ENCODE measurements at regions of chr15 and their contacts with region 1.

Region 1: DNA sequence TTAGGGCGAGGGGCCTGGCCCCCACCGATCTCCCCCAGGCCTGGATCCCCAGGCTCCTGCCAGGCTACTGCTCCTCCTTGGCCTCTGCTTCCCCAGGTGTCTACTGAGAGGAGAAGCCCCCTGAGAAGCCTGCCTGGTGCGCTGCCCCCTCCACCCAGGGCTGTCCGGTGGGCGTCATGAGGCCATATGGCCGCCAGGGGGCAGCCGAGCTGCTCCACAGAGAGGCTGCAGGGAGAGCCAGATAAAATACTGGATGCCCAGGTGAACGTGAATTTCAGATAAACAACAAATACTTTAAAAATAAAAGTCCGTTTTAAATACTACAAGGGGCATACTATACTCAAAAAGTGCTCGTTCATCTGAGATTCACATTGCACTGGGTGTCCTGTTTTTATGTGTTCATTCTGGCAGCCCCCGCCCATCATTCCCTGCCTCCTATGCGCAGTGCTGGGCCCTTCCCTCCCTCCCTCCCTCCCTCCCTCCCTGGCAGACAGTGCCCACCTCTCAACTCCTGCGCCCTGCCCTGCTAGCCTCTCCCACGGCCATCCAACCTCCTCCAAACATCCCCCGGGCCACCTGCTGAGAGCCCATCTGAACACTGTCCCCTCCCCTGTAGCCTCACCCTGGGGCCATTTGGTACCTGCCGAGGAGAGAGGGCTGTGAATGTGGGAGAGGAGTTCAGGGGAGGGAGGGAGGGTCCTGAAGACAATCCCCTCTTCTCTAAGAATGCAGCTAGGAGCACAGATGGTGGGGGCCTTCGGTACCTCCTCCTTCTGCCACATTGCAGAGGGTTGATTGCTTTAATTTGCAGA is 29.6 kb downstream of the PSTPIP1 start:
- DNase-seq: no peak
- H3K4me3 ChIP-seq: no peak overlapping the region
- CTCF ChIP-seq: peak; percentile 91

Region 2: GRCh38 chr15:77002954-77003912 is 21.2 kb before region 1 on chr15:
- CTCF ChIA-PET with region 1: interaction called, 13 read pairs
- POLR2A ChIA-PET with region 1: no interaction called
- DNase-seq: no peak
- H3K4me3 ChIP-seq: no peak overlapping the region
- CTCF ChIP-seq: no peak

Region 3: DNA sequence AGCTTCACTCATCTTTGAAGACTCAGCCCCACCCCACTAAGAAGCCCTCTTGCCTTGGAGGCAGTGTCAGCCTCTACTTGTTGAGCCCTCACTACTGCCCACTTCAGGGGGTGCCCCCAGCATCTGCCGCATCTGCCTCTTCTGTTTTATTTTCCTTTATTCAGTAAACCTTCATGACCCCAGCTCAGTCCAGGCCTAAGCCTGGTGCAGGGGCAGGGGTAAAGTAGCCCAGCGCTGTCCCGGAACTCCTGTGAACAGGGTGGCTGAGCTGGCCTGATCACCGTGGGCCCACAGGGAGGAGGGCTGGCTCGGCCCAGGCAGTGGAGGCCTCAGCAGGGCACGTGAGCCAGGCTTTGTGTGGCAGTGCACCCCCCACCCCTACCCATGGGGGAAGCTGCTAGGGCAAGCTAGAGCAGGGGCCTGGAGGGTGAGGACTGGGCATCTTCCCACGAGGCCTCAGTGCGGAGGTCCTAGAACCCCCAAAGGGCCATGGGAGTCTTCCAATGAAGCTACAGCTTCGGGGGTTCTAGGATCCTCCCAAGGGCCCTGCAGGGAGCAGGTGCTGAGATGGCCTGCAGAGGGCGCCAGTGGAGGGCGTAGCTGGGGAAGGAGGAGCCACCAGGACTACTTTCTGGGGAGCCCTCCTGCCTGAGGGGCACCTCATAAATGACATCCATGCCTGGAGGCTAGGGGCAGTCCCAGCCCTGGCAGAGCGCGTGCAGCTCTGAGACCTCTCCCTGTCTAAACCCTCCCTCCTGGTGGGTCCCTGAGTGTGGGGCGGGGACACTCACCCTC is 10.4 kb after region 1 on chr15:
- CTCF ChIA-PET with region 1: interaction called, 106 read pairs
- POLR2A ChIA-PET with region 1: no interaction called
- DNase-seq: no peak
- H3K4me3 ChIP-seq: no peak overlapping the region
- CTCF ChIP-seq: peak; percentile 69

Region 4: DNA sequence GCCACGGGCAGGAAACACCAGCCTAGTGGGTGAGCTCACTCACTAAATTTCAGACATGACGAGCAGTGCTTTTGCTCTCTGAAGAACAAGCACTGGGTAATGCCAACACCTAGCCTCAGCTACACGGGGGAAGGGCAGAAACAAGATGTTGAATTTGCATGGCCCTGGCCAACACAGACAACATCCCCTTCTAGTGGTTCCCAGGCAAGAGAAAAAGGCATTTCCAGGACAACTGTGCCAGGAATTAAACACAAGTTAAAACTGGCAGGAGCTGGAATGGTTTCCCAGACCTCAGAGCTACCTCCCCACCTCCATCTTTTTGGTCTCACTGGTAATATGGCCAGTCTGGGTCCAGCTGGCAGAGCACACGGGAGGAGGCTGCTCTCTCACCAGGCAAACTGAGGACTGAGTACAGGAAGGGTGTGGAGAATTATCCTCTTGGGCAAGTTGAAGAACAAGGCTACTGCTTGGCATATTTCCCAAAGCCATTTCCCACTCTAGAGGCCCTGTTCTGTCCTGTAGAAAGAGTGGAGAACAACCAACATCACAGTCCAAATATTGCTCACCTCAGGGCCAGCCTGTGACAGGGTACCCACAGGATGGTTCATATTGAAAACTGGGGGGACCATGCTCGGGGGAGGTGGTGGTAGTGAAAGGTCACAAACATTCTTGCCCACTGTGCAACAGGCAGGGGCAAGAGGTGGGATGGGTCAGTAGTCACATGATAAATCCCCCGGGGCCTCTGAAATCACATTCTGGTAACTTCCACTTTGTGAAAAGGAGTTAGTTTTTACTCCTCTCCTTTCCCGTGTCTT is 20.0 kb after region 1 on chr15:
- CTCF ChIA-PET with region 1: interaction called, 25 read pairs
- POLR2A ChIA-PET with region 1: no interaction called
- DNase-seq: no peak
- H3K4me3 ChIP-seq: no peak overlapping the region
- CTCF ChIP-seq: no peak

Region 5: GRCh38 chr15:77059786-77060361 is 35.4 kb after region 1 on chr15:
- CTCF ChIA-PET with region 1: interaction called, 41 read pairs
- POLR2A ChIA-PET with region 1: no interaction called
- DNase-seq: no peak
- H3K4me3 ChIP-seq: no peak overlapping the region
- CTCF ChIP-seq: no peak

Region 6: DNA sequence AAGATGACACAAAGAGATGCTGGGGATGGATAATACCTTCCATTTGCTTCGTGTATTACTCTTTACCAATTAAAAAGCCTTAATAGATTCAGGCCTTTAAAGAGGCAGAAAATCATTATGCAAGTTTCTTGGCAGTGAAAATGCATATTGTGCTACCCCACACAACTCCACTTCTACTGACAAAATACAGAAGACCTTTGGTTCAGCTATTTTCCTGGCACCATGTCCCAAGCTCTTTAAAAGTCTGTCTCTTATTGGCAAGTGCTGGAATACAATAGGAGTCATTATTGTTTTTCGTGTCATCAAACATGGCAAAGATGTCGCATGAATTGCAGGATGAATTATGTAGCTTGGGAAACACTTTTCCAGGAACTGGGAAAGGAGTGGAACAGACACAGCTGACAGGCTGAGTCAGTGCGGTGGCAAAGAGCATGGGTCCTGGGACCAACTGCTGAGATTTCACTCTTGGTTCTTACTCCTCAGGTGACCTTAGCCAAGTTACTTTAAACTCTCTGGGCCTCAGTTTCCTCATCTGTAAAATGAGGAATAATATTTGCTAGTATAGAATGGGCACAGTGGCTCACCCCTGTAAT is 51.9 kb after region 1 on chr15:
- CTCF ChIA-PET with region 1: no interaction called
- POLR2A ChIA-PET with region 1: no interaction called
- DNase-seq: no peak
- H3K4me3 ChIP-seq: no peak overlapping the region
- CTCF ChIP-seq: no peak

Region 7: DNA sequence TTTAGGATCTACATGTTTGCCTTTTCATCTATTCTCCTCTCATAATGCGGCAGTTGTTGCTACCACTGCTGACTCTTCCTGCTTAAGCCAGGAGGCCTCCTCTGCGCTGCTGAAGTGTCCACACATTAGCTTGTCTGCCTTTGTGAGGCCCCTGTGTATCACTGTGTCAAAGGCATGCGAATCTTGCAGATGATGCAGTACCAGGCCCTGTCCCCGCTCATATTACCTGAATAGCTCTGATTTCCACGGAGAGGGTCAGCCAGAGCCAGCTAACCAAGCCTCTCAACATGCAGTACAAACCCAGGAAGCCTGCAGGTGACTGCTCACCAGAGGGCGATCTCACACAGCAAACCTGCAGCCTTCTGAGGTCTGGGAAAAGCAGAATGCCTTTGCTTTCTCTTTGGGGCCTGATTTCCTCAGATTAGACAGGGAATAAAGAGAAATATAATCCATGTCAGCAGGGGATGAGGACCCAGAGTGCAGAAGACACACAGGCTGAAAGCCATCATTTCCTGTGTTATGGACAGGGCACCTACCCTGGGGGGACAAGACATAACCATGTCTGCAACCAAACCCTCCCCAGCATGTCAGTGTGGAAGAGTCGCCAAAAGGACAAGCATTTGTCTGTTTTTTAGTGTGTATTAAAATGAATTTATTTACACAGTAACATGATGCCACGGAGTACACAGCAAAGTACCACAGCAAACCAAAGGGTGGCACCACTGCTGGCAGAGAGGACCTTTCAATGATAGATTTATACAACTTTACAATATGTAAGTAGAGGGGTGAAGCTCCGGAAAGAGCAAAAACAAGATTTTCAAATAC is 83.3 kb after region 1 on chr15:
- CTCF ChIA-PET with region 1: interaction called, 12 read pairs
- POLR2A ChIA-PET with region 1: no interaction called
- DNase-seq: no peak
- H3K4me3 ChIP-seq: no peak overlapping the region
- CTCF ChIP-seq: peak; percentile 82